ENCODE measurements at regions of chr4 and their contacts with region 1.

Region 1: GRCh38 chr4:183256756-183257385 is 63.2 kb downstream of the CLDN22 start:
- DNase-seq: peak; percentile 48 to 75 (median 65)
- H3K4me3 ChIP-seq: no peak overlapping the region
- H3K27ac ChIP-seq: no peak overlapping the region
- H3K4me1 ChIP-seq: peaks cover 0 to under 1% (median 0%) of the 10 kb centered on the region in 4 experiments
- H3K27me3 ChIP-seq: no peaks in the 10 kb centered on the region

Region 2: DNA sequence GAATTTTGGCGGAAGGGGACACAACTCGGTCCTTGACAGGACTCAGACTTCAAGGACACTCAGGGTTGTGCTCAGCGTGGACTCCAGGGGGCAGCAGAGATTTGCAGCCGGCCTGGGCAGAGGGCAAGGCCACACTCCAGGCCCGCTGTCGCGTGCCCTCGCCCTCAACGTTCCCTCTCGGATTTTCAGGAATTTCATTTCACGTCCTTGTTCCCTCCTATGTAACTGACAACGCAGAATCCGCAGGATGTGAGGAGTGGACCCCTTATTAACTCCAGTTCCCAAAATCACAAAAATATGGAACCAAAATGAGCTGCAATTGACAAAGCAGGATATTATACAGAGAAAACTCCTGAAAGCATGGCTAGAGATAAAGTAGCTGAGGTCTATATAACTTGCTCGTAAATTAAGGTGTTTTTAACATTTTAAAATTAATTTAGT is 318.6 kb before region 1 on chr4:
- CTCF ChIA-PET with region 1: interaction called, 137 read pairs
- POLR2A ChIA-PET with region 1: no interaction called
- DNase-seq: peak; percentile 65 to 75 (median 71)
- H3K4me3 ChIP-seq: no peak overlapping the region
- H3K27ac ChIP-seq: no peak overlapping the region
- H3K4me1 ChIP-seq: peaks cover 0 to 1% (median 0%) of the 10 kb centered on the region in 4 experiments
- H3K27me3 ChIP-seq: peaks cover 0 to 2% (median 0%) of the 10 kb centered on the region in 5 experiments

Region 3: GRCh38 chr4:183074296-183074990 is 182.4 kb before region 1 on chr4:
- CTCF ChIA-PET with region 1: interaction called, 146 read pairs
- POLR2A ChIA-PET with region 1: no interaction called
- DNase-seq: no peak
- H3K4me3 ChIP-seq: no peak overlapping the region
- H3K27ac ChIP-seq: no peak overlapping the region
- H3K4me1 ChIP-seq: no peaks in the 10 kb centered on the region
- H3K27me3 ChIP-seq: peaks cover 0 to 1% (median 0%) of the 10 kb centered on the region in 5 experiments

Region 4: GRCh38 chr4:183118585-183118984 is 138.3 kb before region 1 on chr4:
- CTCF ChIA-PET with region 1: no interaction called
- POLR2A ChIA-PET with region 1: no interaction called
- DNase-seq: no peak
- H3K4me3 ChIP-seq: no peak overlapping the region
- H3K27ac ChIP-seq: no peak overlapping the region
- H3K4me1 ChIP-seq: no peaks in the 10 kb centered on the region
- H3K27me3 ChIP-seq: no peaks in the 10 kb centered on the region

Measured in common myeloid progenitor, CD34-positive (primary cell).